Spleen (tissue), 13 donors: ENCODE measurements at regions of chr12 and their contacts with region 1.

Region 1: GRCh38 chr12:68610370-68611093 is at the start of gene RAP1B:
- DNase-seq: peak; percentile 98
- H3K4me3 ChIP-seq: peak within 1 kb of the TSS; percentile 58 to 81 (median 68)
- H3K27ac ChIP-seq: peak within 1 kb of the TSS; percentile 94 to 99 (median 98)
- H3K4me1 ChIP-seq: peaks cover 26 to 60% (median 43%) of the 10 kb centered on the region in 6 donors
- H3K27me3 ChIP-seq: no peaks in the 10 kb centered on the region
- CTCF ChIP-seq: peak in 1 of 11 experiments; percentile 3
- POLR2A ChIP-seq: peak; percentile 85 to 97 (median 95)
- total RNA-seq, gene RAP1B: 178 to 321 (median 249) TPM

Region 2: GRCh38 chr12:68406134-68406594 is 204.4 kb before region 1 on chr12:
- intact Hi-C with region 1: no loop called
- DNase-seq: peak; percentile 92
- H3K4me3 ChIP-seq: peak overlapping the region in 2 of 8 donors; percentile 3 to 35
- H3K27ac ChIP-seq: peak overlapping the region; percentile 31 to 87 (median 78)
- H3K4me1 ChIP-seq: peaks cover 13 to 49% (median 31%) of the 10 kb centered on the region in 6 donors
- H3K27me3 ChIP-seq: no peaks in the 10 kb centered on the region
- CTCF ChIP-seq: peak in 9 of 11 experiments; percentile 16 to 66 (median 45)
- POLR2A ChIP-seq: no peak

Region 3: GRCh38 chr12:68538726-68539614 is 71.6 kb before region 1 on chr12:
- intact Hi-C with region 1: loop called (anchors 10 kb)
- DNase-seq: no peak
- H3K4me3 ChIP-seq: peak overlapping the region in 6 of 8 donors; percentile 5 to 48 (median 20)
- H3K27ac ChIP-seq: peak overlapping the region; percentile 17 to 85 (median 74)
- H3K4me1 ChIP-seq: peaks cover 0 to 38% (median 21%) of the 10 kb centered on the region in 6 donors
- H3K27me3 ChIP-seq: no peaks in the 10 kb centered on the region
- CTCF ChIP-seq: no peak
- POLR2A ChIP-seq: no peak

Region 4: GRCh38 chr12:68665016-68665569 is 54.6 kb after region 1 on chr12:
- intact Hi-C with region 1: no loop called
- DNase-seq: no peak
- H3K4me3 ChIP-seq: no peak overlapping the region
- H3K27ac ChIP-seq: peak overlapping the region in 2 of 8 donors; percentile 34 to 52
- H3K4me1 ChIP-seq: peaks cover 0 to 31% (median 16%) of the 10 kb centered on the region in 6 donors
- H3K27me3 ChIP-seq: no peaks in the 10 kb centered on the region
- CTCF ChIP-seq: no peak
- POLR2A ChIP-seq: no peak

Region 5: DNA sequence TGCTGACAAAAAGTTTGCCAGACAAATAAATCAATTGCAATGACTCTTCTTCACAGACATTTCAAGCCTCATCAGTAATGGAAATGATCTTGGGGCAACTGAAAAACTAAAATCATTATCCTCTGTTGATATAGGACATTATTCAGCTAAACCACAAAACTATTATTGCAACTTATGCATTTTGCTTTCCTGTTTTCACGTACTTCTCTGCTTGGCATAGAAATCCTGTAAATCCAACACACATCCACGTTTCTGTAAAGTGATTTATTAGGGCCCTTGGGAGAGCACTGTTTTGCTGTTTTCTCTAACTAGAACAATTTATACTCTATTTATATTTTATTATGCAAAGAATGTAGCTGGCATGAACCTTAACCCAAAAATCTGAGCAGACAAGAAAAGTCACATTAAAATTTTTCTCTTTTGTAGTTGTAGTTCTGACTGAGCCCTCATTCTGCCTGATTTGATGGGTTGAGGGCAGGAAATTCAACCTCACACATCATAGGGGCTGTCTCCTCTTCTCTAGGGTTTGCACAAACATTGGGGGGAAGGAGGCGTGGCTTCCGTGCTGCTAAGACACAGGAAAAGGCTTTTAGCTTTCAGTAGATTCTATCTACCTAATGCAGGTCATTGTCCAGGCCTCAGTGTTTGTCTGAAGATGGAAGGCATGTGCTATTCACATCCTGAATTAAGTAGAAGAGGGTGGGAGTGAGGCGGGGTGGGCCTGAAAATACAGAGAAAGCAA is 64.7 kb after region 1 on chr12:
- intact Hi-C with region 1: no loop called
- DNase-seq: peak; percentile 88
- H3K4me3 ChIP-seq: no peak overlapping the region
- H3K27ac ChIP-seq: peak overlapping the region in 5 of 8 donors; percentile 31 to 78 (median 68)
- H3K4me1 ChIP-seq: peaks cover 0 to 38% (median 20%) of the 10 kb centered on the region in 6 donors
- H3K27me3 ChIP-seq: no peaks in the 10 kb centered on the region
- CTCF ChIP-seq: no peak
- POLR2A ChIP-seq: no peak